A549 (cell line): ENCODE measurements at regions of chr11 and their contacts with region 1.

Region 1: DNA sequence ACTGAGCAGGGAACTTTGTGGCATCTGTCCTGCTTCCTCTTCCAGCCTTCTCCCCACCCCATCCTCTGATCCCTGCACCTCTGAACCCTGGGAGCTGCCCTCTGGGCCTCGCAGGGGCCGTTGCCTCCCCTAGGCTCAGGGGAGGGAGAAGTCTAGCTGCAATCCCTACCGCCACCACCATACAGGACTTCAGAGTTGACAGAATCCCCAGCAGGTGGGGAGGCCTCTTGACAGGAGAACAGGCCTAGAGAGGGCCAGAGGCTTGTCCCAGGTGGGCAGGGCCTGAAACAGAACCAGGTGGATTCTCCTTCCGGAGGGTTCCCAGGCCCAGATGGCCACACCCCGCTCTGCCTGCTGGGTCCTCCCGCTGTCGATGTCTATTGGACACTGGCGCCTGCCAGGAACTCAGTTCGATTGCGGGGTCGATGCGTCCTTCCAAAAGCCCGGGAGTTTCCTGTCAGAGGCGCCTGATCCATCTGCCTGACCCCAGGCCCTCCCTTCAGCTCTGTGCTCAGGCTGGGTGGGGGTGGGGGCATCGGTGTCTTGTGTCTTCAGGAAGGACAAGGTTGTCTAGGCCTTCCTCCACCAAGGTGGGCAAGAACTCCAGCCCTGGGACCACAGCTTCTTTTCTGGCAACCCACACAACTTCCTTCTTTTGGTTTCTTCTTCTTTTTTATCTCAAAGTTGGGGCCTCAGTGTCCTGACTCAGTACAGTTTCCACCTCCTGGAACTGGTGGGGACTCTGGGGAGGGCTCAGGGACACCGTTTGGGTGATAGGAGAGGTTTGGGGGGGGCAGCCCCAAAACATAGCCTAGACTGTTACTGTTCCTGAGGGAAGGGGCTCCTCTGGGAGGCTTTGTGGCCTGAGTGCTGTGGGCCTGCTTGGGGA is 6.4 kb downstream of the STARD10 start:
- DNase-seq: peak in 1 of 2 experiments; percentile 51
- ATAC-seq: peak; percentile 51 to 77; a peak in 5 of 6 replicates
- H3K4me3 ChIP-seq: no peak overlapping the region
- H3K27ac ChIP-seq: no peak overlapping the region
- H3K4me1 ChIP-seq: peaks cover 1% of the 10 kb centered on the region; the same call in 2 of the 3 replicates
- CTCF ChIP-seq: no peak
- EP300 ChIP-seq: no peak
- POLR2A ChIP-seq: no peak
- RAD21 ChIP-seq: no peak

Region 2: GRCh38 chr11:72814286-72815109 is 27.0 kb after region 1 on chr11 and contains the start of gene ATG16L2:
- CTCF ChIA-PET with region 1: interaction called, 42 read pairs
- POLR2A ChIA-PET with region 1: no interaction called
- DNase-seq: peak; percentile 90 to 93
- ATAC-seq: peak; percentile 72 to 85
- H3K4me3 ChIP-seq: peak within 1 kb of the TSS; percentile 58
- H3K27ac ChIP-seq: peak within 1 kb of the TSS; percentile 78 to 95
- H3K4me1 ChIP-seq: peaks cover 22% of the 10 kb centered on the region
- CTCF ChIP-seq: peak; percentile 12; the same call in 1 of the 3 replicates
- EP300 ChIP-seq: peak in 1 of 2 experiments; percentile 25; a peak in 1 of 5 replicates
- POLR2A ChIP-seq: peak; percentile 93
- RAD21 ChIP-seq: peak in 1 of 2 experiments; percentile 33; a peak in 3 of 5 replicates
- polyA plus RNA-seq, gene ATG16L2: 6.1 and 6.2 TPM in 2 replicates

Region 3: GRCh38 chr11:72840780-72841179 is 53.3 kb after region 1 on chr11:
- CTCF ChIA-PET with region 1: no interaction called
- POLR2A ChIA-PET with region 1: no interaction called
- DNase-seq: peak in 1 of 2 experiments; percentile 35
- ATAC-seq: no peak; a peak in 1 of 6 replicates
- H3K4me3 ChIP-seq: no peak overlapping the region
- H3K27ac ChIP-seq: peak overlapping the region; percentile 6 to 66; a peak in 5 of 6 replicates
- H3K4me1 ChIP-seq: peaks cover 8% of the 10 kb centered on the region; the same call in 1 of the 3 replicates
- CTCF ChIP-seq: no peak
- EP300 ChIP-seq: no peak
- POLR2A ChIP-seq: no peak
- RAD21 ChIP-seq: no peak